ENCODE measurements at regions of chr6 and their contacts with region 1.

Region 1: GRCh38 chr6:33288921-33289748 is at the starts of genes PFDN6 and WDR46:
- DNase-seq: peak; percentile 91
- ATAC-seq: peak; percentile 98
- H3K4me3 Mint-ChIP-seq: peak within 1 kb of the TSS; percentile 89
- H3K27ac Mint-ChIP-seq: peak within 1 kb of the TSS; percentile 89
- H3K4me1 Mint-ChIP-seq: peaks cover 33% of the 10 kb centered on the region
- H3K27me3 Mint-ChIP-seq: no peaks in the 10 kb centered on the region
- CTCF ChIP-seq: no peak
- total RNA-seq, gene PFDN6: 78.1 to 92.3 TPM
- total RNA-seq, gene WDR46: 64.0 to 72.2 TPM

Region 2: DNA sequence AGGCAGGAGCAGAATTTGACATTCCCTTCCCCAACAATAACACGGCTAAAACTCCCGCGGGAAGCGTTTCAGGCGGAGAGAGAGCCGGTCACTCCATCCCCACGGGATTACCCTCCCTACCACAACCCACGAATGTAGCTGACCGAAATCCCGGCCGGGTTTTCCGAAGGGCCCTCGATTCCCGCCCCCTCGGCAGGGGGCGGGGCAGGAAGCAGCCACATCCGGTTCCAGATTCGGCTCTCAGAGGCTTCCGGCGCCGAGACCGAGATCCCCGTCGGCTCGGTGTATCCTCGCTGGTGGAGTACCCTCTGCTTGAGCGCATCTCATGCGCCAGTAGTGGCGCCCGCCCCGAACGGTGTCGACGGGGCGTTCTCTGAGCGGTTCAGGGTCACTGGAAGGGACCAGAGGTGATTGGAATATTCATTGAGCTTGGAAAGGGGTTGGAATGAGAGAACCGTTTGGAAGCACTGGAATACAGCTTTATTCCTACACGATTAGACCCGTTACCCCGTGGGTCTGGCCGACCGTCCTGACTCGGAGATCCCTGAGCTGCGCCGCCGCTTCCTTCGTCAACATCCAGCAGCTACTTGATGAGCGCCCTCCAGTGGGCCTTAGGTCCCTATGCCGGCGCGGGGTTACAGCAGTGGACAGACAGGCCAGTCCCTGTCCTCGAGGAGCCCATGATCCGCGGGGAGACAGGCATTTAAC is 10.3 kb after region 1 on chr6:
- CTCF ChIA-PET with region 1: interaction called, 13 read pairs
- POLR2A ChIA-PET with region 1: interaction called, 77 read pairs
- intact Hi-C with region 1: no loop called
- DNase-seq: peak; percentile 96
- ATAC-seq: peak; percentile 86
- H3K4me3 Mint-ChIP-seq: peak overlapping the region; percentile 97
- H3K27ac Mint-ChIP-seq: peak overlapping the region; percentile 99
- H3K4me1 Mint-ChIP-seq: peaks cover 33% of the 10 kb centered on the region
- H3K27me3 Mint-ChIP-seq: no peaks in the 10 kb centered on the region
- CTCF ChIP-seq: peak; percentile 74

Measured in activated CD8-positive, alpha-beta T cell treated with anti-CD3 and anti-CD28 coated beads for 36 hours (primary cell).